Spleen (tissue), 13 donors: ENCODE measurements at regions of chr11 and their contacts with region 1.

Region 1: DNA sequence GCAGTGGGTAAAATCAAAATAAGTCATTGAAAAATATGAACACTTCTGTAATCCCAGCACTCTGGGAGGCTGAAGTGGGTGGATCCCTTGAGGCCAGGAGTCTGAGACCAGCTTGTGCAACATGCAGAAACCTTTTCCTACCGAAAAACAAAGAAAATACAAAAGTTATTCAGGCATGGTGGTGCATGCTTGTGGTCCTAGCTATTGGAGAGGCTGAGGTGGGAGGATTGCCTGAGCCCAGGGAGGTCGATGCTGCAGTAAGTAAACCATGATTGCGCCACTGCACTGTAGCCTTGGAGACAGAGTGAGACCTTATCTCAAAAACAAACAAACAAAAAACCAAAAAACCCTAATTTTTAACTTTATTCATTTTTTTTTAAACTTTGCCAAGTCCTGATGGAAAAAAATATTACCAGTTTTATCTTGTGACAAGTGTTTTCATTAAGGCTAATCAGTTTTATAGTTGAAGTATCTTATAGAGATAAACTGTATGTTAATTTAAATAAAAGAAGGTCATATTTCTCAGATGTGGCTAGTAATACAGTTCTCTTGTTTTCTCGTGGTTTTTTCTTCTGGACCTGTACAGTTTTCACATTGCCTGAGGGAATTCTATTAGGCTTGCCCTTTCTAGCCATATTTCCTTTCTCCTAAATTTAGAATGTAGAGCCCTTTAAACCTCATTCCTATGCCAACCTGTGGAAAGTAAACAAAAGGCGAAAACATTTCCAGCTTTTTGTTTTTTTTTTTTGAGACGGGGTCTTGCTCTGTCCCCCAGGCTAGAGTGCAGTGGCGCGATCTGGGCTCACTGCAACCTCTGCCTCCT is 9.4 kb downstream of the HIPK3 start:
- DNase-seq: no peak
- H3K4me3 ChIP-seq: no peak overlapping the region
- H3K27ac ChIP-seq: peak overlapping the region in 1 of 8 donors; percentile 24
- H3K4me1 ChIP-seq: peaks cover 15 to 100% (median 73%) of the 10 kb centered on the region in 6 donors
- H3K27me3 ChIP-seq: no peaks in the 10 kb centered on the region
- CTCF ChIP-seq: no peak
- POLR2A ChIP-seq: no peak

Region 2: DNA sequence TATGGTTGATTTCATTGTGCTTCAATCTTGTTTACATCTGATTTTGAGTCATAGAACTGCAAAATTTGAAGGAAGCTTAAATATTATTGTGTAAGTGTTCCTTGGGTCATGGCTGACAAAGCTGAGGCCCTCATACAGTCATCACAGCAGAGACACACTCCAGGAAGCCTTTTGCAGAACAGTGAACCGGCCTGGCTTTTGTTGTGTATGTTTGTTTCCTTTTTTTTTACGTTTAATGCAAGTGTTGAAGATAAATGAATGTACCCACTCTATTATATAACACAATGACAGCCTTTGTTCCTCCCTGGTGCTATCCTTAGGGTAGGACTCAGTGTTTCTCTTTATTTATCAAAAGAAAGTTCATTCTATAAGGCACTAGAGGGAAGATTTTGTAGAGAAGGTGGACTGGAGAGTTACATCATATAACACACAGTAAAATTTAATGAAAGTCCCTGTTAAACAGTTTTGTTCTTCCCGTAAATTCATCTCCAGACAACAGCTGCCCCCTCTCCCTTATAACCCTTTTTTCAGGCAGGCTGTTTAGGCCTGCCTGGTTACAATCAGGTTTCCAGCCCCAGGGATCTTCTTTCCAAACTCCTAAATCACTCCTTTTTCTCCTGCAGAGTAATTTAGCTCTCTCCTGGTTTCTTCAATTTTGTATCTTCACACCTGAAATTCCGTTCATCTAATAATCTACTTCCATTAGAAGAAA is 71.0 kb before region 1 on chr11:
- intact Hi-C with region 1: no loop called
- DNase-seq: no peak
- H3K4me3 ChIP-seq: no peak overlapping the region
- H3K27ac ChIP-seq: peak overlapping the region in 3 of 8 donors; percentile 29 to 64 (median 60)
- H3K4me1 ChIP-seq: peaks cover 0 to 13% (median 5%) of the 10 kb centered on the region in 6 donors
- H3K27me3 ChIP-seq: no peaks in the 10 kb centered on the region
- CTCF ChIP-seq: no peak
- POLR2A ChIP-seq: no peak

Region 3: GRCh38 chr11:33207408-33207985 is 59.1 kb before region 1 on chr11:
- intact Hi-C with region 1: no loop called
- DNase-seq: no peak
- H3K4me3 ChIP-seq: no peak overlapping the region
- H3K27ac ChIP-seq: peak overlapping the region in 1 of 8 donors; percentile 10
- H3K4me1 ChIP-seq: peaks cover 0 to 30% (median 0%) of the 10 kb centered on the region in 6 donors
- H3K27me3 ChIP-seq: no peaks in the 10 kb centered on the region
- CTCF ChIP-seq: no peak
- POLR2A ChIP-seq: no peak

Region 4: GRCh38 chr11:33329705-33330329 is 63.2 kb after region 1 on chr11:
- intact Hi-C with region 1: loop called (anchors 10 kb)
- DNase-seq: no peak
- H3K4me3 ChIP-seq: no peak overlapping the region
- H3K27ac ChIP-seq: no peak overlapping the region
- H3K4me1 ChIP-seq: peaks cover 10 to 78% (median 29%) of the 10 kb centered on the region in 6 donors
- H3K27me3 ChIP-seq: no peaks in the 10 kb centered on the region
- CTCF ChIP-seq: peak in 9 of 11 experiments; percentile 4 to 57 (median 50)
- POLR2A ChIP-seq: no peak